A549 (cell line): ENCODE measurements at regions of chr17 and their contacts with region 1.

Region 1: DNA sequence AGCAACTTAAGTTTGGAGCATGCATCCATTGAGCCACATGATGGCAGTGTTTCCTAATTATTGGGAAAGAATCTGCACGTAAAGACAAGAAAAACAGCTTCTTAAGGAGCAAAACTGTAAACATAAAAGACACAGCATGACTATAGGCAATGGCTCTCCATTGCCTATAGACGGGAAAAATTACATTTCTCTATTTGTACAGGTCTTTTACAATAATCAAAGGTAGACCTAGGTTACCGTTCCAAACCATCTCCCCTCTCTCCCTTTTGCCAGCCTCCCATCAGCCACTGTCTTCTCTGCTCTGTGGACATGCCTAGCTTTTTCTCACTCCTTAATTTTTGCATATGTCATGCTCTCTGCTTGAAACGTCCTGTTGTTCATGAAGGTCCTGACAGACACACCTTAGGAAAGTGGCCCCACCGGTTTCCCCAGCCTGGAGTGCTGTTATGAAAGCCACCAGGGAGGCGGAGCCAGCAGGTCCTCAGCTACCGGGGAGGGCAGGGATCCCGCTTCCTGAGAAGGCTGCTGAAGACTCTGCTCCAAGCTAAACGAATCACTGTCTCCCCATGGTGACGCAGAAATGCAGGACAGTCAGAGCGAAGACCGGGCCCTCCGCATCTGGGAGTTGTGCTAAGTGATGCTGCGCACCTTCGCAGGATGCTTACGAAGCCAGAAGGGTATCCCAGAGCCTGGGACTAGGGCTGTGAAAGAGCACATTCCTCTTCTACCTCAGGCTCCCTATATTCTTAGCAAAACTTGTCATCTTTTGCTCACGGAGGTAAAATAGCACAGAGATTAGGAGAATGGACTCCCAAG is 2.2 kb upstream of the SLC16A11 start:
- DNase-seq: peak; percentile 76 to 91
- ATAC-seq: peak; percentile 51 to 69
- H3K4me3 ChIP-seq: no peak overlapping the region
- H3K27ac ChIP-seq: peak overlapping the region in 1 of 2 experiments; percentile 12; a peak in 1 of 6 replicates
- H3K4me1 ChIP-seq: peaks cover 19% of the 10 kb centered on the region
- CTCF ChIP-seq: peak; percentile 99
- EP300 ChIP-seq: no peak
- POLR2A ChIP-seq: no peak
- RAD21 ChIP-seq: peak; percentile 98 to 99

Region 2: DNA sequence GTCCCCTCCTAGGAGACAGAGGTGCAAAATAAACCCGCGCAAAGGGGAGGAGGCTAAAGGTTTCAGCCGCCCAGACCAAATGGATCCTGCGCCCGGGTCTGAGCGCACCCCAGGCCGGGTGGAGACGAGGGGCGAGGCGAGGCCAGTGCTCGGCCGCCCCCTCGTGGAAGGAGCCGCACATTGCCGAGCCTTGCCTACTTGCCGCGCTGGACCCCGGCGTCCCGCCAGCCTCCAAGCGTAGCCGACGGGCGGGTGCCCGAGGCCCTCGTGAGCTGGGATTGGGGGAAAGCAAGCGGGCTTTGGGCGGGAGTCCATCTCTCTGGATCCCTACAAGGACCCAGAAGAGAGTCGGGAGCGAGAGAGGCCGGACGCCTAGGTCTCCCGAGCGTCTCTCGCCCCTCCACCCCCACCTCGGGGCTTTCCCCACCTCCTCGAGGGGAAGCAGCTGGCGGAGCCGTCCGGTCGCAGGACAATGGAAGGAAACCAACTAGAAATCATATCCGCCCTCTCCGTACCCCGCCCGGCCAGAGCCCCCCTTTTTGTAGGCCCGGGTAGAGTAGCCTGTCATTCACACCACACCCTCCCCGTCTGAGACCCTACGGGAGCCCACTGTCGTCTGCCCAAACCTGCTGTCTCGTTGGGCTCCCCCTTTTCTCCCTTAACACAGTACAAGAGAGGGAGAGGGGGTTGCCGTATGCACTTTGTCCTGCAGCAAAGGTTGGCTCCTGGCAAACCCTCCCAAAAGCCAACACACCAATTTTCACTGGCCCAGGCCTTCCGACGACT is 23.9 kb before region 1 on chr17:
- CTCF ChIA-PET with region 1: interaction called, 20 read pairs
- POLR2A ChIA-PET with region 1: no interaction called
- DNase-seq: peak; percentile 78 to 95
- ATAC-seq: peak; percentile 60 to 83
- H3K4me3 ChIP-seq: no peak overlapping the region
- H3K27ac ChIP-seq: peak overlapping the region; percentile 42 to 71; a peak in 5 of 6 replicates
- H3K4me1 ChIP-seq: peaks cover 24% of the 10 kb centered on the region
- CTCF ChIP-seq: peak; percentile 91
- EP300 ChIP-seq: no peak
- POLR2A ChIP-seq: no peak
- RAD21 ChIP-seq: peak; percentile 82 to 88

Region 3: DNA sequence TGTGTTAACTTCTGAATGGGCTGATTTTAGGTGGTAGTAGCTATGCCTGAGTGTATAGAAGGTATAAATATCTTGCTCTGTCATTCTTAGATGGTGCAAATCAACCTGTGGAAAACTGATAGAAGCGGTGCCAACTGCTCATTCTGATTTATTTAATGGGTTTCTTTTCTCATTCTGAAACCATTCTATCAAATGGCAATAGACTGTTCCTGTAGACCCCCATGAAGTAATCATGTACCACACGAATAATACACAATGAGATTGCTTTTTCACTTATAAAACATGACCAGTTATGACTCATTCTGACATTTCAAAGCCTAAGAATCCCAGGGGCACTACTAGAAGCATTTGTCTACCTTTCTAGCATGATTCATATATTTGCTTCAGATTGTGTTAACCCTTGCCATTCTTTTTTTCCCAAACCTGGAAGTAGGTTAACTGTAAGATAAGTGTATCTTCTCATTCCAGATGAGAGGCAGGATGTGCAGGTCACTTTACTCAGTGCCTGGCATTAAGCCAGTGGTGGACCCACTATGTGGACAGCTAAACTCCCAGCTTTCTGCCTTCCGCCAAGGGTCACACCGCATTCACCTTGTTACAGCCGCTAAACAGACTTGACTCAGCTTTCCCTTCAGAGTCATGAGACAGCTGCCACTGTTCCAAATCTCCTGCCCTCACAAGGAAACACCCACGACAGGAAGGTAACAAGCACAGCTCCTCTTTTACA is 14.2 kb after region 1 on chr17:
- CTCF ChIA-PET with region 1: interaction called, 132 read pairs
- POLR2A ChIA-PET with region 1: interaction called, 3 read pairs
- DNase-seq: peak; percentile 96 to 98
- ATAC-seq: peak; percentile 90 to 96
- H3K4me3 ChIP-seq: no peak overlapping the region
- H3K27ac ChIP-seq: peak overlapping the region; percentile 79 to 91
- H3K4me1 ChIP-seq: peaks cover 51% of the 10 kb centered on the region
- CTCF ChIP-seq: no peak
- EP300 ChIP-seq: peak; percentile 53 to 70; a peak in 2 of 5 replicates
- POLR2A ChIP-seq: no peak
- RAD21 ChIP-seq: peak; percentile 7 to 29; a peak in 2 of 5 replicates

Region 4: GRCh38 chr17:7101531-7101930 is 55.4 kb after region 1 on chr17:
- CTCF ChIA-PET with region 1: interaction called, 10 read pairs
- POLR2A ChIA-PET with region 1: no interaction called
- DNase-seq: no peak
- ATAC-seq: peak in 1 of 2 experiments; percentile 16; a peak in 3 of 6 replicates
- H3K4me3 ChIP-seq: no peak overlapping the region
- H3K27ac ChIP-seq: no peak overlapping the region
- H3K4me1 ChIP-seq: peaks cover 6% of the 10 kb centered on the region
- CTCF ChIP-seq: no peak
- EP300 ChIP-seq: no peak
- POLR2A ChIP-seq: no peak
- RAD21 ChIP-seq: no peak

Region 5: DNA sequence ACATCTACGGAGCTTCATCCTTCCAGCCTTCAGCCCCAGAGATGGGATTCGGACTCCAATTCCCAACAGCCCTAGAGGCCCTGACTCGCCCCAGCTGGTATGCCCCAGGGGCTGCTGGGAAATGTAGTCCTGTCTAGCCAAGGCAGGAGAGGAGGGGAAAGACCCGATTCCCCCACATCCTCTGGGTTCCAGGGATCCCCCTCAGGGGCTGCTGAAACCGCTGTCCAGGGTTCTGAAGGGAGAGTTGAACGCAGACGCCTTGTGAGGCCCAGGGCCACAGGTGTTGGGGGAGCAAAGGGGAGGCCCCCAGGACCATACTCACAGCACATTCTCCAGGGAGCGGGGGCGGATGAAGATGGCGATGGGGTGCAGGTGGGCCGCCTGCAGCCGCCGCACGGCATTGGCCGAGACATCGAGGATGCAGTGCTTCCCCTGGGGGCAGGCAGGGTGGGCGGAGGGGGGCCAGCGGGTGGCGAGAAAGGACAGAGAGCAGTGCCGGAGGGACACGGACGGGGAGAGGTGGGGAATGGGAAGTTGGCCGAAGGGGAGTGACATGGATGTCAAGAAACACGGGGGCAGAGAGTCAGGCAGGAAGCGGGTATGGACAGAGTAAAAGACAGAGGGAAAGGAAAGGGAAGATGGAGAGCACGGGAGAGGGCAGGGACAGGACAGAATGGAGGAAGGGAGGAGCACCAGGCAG is 145.6 kb after region 1 on chr17:
- CTCF ChIA-PET with region 1: interaction called, 314 read pairs
- POLR2A ChIA-PET with region 1: no interaction called
- DNase-seq: peak; percentile 51 to 82
- ATAC-seq: peak; percentile 84 to 91
- H3K4me3 ChIP-seq: no peak overlapping the region
- H3K27ac ChIP-seq: no peak overlapping the region
- H3K4me1 ChIP-seq: no peaks in the 10 kb centered on the region
- CTCF ChIP-seq: no peak
- EP300 ChIP-seq: no peak
- POLR2A ChIP-seq: no peak
- RAD21 ChIP-seq: no peak

Region 6: GRCh38 chr17:7280519-7281429 is 234.7 kb after region 1 on chr17:
- CTCF ChIA-PET with region 1: interaction called, 13 read pairs
- POLR2A ChIA-PET with region 1: no interaction called
- DNase-seq: peak; percentile 90 to 96
- ATAC-seq: peak; percentile 80 to 88
- H3K4me3 ChIP-seq: peak overlapping the region; percentile 46
- H3K27ac ChIP-seq: peak overlapping the region; percentile 47 to 74
- H3K4me1 ChIP-seq: peaks cover 11% of the 10 kb centered on the region
- CTCF ChIP-seq: peak; percentile 97
- EP300 ChIP-seq: no peak
- POLR2A ChIP-seq: no peak
- RAD21 ChIP-seq: peak; percentile 99 to 100